CD8-positive, alpha-beta T cell (primary cell): ENCODE measurements at regions of chr15 and their contacts with region 1.

Region 1: GRCh38 chr15:74460871-74461846 is at the start of gene UBL7:
- DNase-seq: peak; percentile 93 to 99 (median 96)
- ATAC-seq: peak; percentile 98
- H3K4me3 ChIP-seq: peak within 1 kb of the TSS; percentile 74 to 85
- H3K4me3 Mint-ChIP-seq: peak within 1 kb of the TSS; percentile 93
- H3K27ac ChIP-seq: peak within 1 kb of the TSS; percentile 53 to 83
- H3K27ac Mint-ChIP-seq: peak within 1 kb of the TSS; percentile 94
- H3K4me1 ChIP-seq: peaks cover 21% of the 10 kb centered on the region
- H3K4me1 Mint-ChIP-seq: peaks cover 50% of the 10 kb centered on the region
- H3K27me3 ChIP-seq: no peaks in the 10 kb centered on the region
- H3K27me3 Mint-ChIP-seq: no peaks in the 10 kb centered on the region
- CTCF ChIP-seq: no peak
- total RNA-seq, gene UBL7: 21.7 to 23.1 TPM

Region 2: GRCh38 chr15:74433592-74434262 is 27.4 kb before region 1 on chr15 and contains the start of gene SEMA7A:
- CTCF ChIA-PET with region 1: interaction called, 10 read pairs
- POLR2A ChIA-PET with region 1: interaction called, 7 read pairs
- intact Hi-C with region 1: loop called in 1 of 2 experiments (anchors 1 kb)
- DNase-seq: peak; percentile 49 to 91 (median 72)
- ATAC-seq: peak; percentile 81
- H3K4me3 ChIP-seq: peak within 1 kb of the TSS; percentile 56 to 68
- H3K4me3 Mint-ChIP-seq: peak within 1 kb of the TSS; percentile 80
- H3K27ac ChIP-seq: peak within 1 kb of the TSS; percentile 23 to 73
- H3K27ac Mint-ChIP-seq: peak within 1 kb of the TSS; percentile 57
- H3K4me1 ChIP-seq: peaks cover 16% of the 10 kb centered on the region
- H3K4me1 Mint-ChIP-seq: peaks cover 40% of the 10 kb centered on the region
- H3K27me3 ChIP-seq: no peaks in the 10 kb centered on the region
- H3K27me3 Mint-ChIP-seq: no peaks in the 10 kb centered on the region
- CTCF ChIP-seq: no peak
- total RNA-seq, gene SEMA7A: 8.8 to 9.4 TPM

Region 3: GRCh38 chr15:74489518-74490338 is 28.6 kb after region 1 on chr15:
- CTCF ChIA-PET with region 1: interaction called, 3 read pairs
- POLR2A ChIA-PET with region 1: interaction called, 6 read pairs
- intact Hi-C with region 1: loop called (anchors 1 kb)
- DNase-seq: peak; percentile 58 to 90 (median 79)
- ATAC-seq: peak; percentile 93
- H3K4me3 ChIP-seq: peak overlapping the region; percentile 14 to 18
- H3K4me3 Mint-ChIP-seq: peak overlapping the region; percentile 65
- H3K27ac ChIP-seq: peak overlapping the region in 1 of 2 experiments; percentile 55
- H3K27ac Mint-ChIP-seq: peak overlapping the region; percentile 83
- H3K4me1 ChIP-seq: peaks cover 19% of the 10 kb centered on the region
- H3K4me1 Mint-ChIP-seq: peaks cover 22% of the 10 kb centered on the region
- H3K27me3 ChIP-seq: no peaks in the 10 kb centered on the region
- H3K27me3 Mint-ChIP-seq: no peaks in the 10 kb centered on the region
- CTCF ChIP-seq: peak; percentile 59

Region 4: DNA sequence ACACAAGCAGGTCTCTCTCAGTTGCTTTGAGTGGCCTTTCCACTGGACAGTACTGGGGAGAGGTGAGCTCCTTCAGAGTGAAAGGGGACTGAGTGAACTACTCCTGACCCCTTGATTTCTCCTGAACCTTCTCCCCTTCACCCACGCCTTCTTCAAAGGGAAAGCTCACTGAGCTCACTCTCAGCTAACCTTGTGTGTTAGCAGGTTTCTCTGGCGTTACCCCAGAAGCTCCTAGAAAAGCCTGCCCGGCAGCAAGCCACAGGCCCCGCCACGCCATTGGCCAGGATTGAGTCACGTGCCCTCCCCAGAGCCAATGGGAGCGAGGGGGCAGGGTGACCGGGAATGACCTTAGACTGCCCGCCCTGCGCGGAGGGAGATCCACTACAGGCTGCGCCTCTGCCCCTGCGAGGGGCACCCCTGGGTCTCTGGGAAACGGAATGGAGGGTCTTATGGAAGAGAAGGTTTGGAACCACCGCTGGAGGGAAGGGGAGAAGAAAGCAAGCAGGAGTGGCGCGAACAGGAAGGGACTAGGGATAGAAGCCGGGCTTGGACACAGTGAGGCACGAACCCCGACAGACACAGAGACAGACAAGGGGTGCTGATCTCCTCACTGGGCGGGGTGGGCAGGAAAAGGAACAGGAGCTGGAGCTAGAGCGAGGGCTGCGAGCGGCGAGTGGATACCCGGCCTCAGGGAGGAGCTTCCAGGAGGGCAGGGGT is 137.1 kb after region 1 on chr15:
- CTCF ChIA-PET with region 1: no interaction called
- POLR2A ChIA-PET with region 1: no interaction called
- intact Hi-C with region 1: loop called in 1 of 2 experiments (anchors 5 kb)
- DNase-seq: peak; percentile 71 to 91 (median 87)
- ATAC-seq: peak; percentile 98
- H3K4me3 ChIP-seq: peak overlapping the region; percentile 86 to 87
- H3K4me3 Mint-ChIP-seq: peak overlapping the region; percentile 99
- H3K27ac ChIP-seq: peak overlapping the region; percentile 75 to 78
- H3K27ac Mint-ChIP-seq: peak overlapping the region; percentile 97
- H3K4me1 ChIP-seq: peaks cover 11% of the 10 kb centered on the region
- H3K4me1 Mint-ChIP-seq: peaks cover 23% of the 10 kb centered on the region
- H3K27me3 ChIP-seq: no peaks in the 10 kb centered on the region
- H3K27me3 Mint-ChIP-seq: no peaks in the 10 kb centered on the region
- CTCF ChIP-seq: no peak

Region 5: DNA sequence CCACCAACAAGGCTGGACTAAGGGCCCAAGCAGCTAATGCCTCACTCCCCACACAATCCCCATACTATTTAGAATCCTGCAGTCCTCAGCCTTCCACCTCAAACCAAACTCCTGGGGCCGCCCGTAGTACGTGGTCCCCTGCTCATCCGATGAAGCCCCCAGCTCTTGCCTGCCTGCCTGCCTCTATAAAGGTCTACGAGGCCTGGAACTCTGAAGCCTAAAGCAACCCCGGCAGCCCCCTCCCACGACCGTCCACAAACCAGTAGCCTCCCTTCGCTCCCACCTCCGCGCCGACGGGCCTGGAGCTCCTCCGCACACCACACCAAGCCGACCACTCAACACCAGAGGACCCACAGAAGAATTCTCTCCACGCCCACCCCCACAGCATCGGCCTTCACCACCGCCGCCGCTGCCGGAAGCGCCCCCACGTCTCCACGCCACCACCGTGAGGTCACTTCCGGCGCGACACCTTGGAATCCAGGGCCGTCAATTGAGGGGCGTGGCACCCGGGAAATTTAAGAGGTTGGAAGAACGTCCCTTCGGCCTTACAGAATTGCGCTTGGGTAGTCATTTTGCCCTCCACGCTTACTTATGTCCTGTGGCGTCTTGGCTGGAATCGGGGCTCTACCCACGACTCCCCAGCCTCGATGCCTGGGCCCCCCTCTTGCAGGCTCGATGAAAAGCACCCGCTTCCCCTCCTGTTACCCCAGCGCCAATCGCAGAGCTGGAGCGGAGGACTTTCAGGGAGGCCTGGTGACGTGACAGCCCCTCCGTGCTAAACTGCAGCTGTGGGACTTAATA is 234.6 kb after region 1 on chr15 and contains the start of gene EDC3:
- CTCF ChIA-PET with region 1: no interaction called
- POLR2A ChIA-PET with region 1: no interaction called
- intact Hi-C with region 1: loop called (anchors 1 kb)
- DNase-seq: peak; percentile 72 to 94 (median 89)
- ATAC-seq: peak; percentile 88
- H3K4me3 ChIP-seq: peak within 1 kb of the TSS; percentile 79 to 93
- H3K4me3 Mint-ChIP-seq: peak within 1 kb of the TSS; percentile 100
- H3K27ac ChIP-seq: peak within 1 kb of the TSS; percentile 80 to 83
- H3K27ac Mint-ChIP-seq: peak within 1 kb of the TSS; percentile 99
- H3K4me1 ChIP-seq: peaks cover 14% of the 10 kb centered on the region
- H3K4me1 Mint-ChIP-seq: peaks cover 47% of the 10 kb centered on the region
- H3K27me3 ChIP-seq: peaks cover 0 to 1% of the 10 kb centered on the region in 2 experiments
- H3K27me3 Mint-ChIP-seq: no peaks in the 10 kb centered on the region
- CTCF ChIP-seq: no peak
- total RNA-seq, gene EDC3: 9.8 to 11.8 TPM